OCI-LY7 (cell line): ENCODE measurements at regions of chr13 and their contacts with region 1.

Region 1: DNA sequence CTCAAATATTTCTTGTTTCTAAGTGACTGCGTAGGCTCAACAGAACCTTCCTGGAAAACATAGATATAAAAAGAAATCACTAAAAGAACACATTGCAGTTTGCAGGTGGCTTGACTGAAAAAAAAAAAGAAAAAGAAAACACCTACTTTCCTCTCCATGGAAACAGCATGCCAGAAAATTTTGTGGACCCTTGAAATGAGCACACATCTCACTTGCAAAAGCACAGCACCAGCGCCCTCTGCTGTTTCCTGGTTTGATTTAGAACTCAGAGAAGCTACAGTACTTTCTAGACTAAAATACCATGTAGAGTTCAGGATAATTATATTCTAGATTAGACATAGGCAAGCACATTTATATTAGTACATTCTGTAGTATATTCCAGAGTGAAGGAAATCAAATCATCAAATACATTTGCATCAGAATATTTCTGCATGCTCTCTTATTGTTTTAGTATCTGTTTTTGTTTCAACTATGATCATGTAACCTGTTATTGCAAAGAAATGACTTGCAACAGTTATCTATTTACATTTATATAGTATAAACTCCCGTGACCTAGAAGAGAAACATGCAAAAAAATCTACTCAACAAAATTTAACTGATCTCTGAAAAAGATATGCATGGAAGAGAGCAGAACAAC is 22.3 kb upstream of the XPO4 start:
- DNase-seq: peak; percentile 81
- H3K4me3 ChIP-seq: no peak overlapping the region
- H3K27ac ChIP-seq: no peak overlapping the region
- H3K4me1 ChIP-seq: peaks cover 2% of the 10 kb centered on the region
- CTCF ChIP-seq: peak; percentile 97

Region 2: GRCh38 chr13:20197361-20197834 is 727.5 kb before region 1 on chr13:
- CTCF ChIA-PET with region 1: no interaction called
- POLR2A ChIA-PET with region 1: interaction called, 3 read pairs
- intact Hi-C with region 1: loop called (anchors 10 kb)
- DNase-seq: peak; percentile 49
- H3K4me3 ChIP-seq: no peak overlapping the region
- H3K27ac ChIP-seq: no peak overlapping the region
- H3K4me1 ChIP-seq: no peaks in the 10 kb centered on the region
- CTCF ChIP-seq: peak; percentile 71

Region 3: GRCh38 chr13:20495082-20496023 is 429.5 kb before region 1 on chr13:
- CTCF ChIA-PET with region 1: interaction called, 3 read pairs
- POLR2A ChIA-PET with region 1: interaction called, 3 read pairs
- intact Hi-C with region 1: loop called (anchors 1 kb)
- DNase-seq: peak; percentile 69
- H3K4me3 ChIP-seq: no peak overlapping the region
- H3K27ac ChIP-seq: no peak overlapping the region
- H3K4me1 ChIP-seq: no peaks in the 10 kb centered on the region
- CTCF ChIP-seq: peak; percentile 98

Region 4: GRCh38 chr13:20566898-20567874 is 357.7 kb before region 1 on chr13 and contains the start of gene IFT88:
- CTCF ChIA-PET with region 1: no interaction called
- POLR2A ChIA-PET with region 1: no interaction called
- intact Hi-C with region 1: loop called (anchors 10 kb)
- DNase-seq: peak; percentile 86
- H3K4me3 ChIP-seq: peak within 1 kb of the TSS; percentile 80
- H3K27ac ChIP-seq: peak within 1 kb of the TSS; percentile 53
- H3K4me1 ChIP-seq: peaks cover 4% of the 10 kb centered on the region
- CTCF ChIP-seq: no peak
- total RNA-seq, gene IFT88: 6.7 and 6.9 TPM in 2 replicates

Region 5: GRCh38 chr13:20713751-20714150 is 211.1 kb before region 1 on chr13:
- CTCF ChIA-PET with region 1: no interaction called
- POLR2A ChIA-PET with region 1: no interaction called
- intact Hi-C with region 1: loop called (anchors 2 kb)
- DNase-seq: no peak
- H3K4me3 ChIP-seq: no peak overlapping the region
- H3K27ac ChIP-seq: no peak overlapping the region
- H3K4me1 ChIP-seq: no peaks in the 10 kb centered on the region
- CTCF ChIP-seq: no peak

Region 6: DNA sequence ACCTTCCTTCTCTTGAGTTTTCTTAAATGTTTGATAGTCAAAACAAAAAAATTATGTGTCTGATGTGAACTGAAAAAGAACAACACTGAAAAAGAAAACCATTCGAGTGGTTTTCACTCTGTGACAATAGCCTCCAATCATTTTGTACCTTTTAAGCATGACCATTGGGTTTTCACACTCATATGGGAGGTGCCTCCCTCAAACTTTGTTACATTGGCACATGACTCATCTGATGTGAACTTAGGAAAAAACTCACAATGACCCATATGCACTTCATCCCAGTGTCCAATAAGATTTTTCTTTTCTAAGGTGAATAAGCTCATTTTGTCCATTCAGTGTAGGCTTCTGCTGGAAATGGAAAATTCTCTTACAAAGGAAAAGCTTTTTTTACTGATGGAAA is 44.3 kb after region 1 on chr13:
- CTCF ChIA-PET with region 1: no interaction called
- POLR2A ChIA-PET with region 1: no interaction called
- intact Hi-C with region 1: no loop called
- DNase-seq: no peak
- H3K4me3 ChIP-seq: no peak overlapping the region
- H3K27ac ChIP-seq: no peak overlapping the region
- H3K4me1 ChIP-seq: no peaks in the 10 kb centered on the region
- CTCF ChIP-seq: no peak